ENCODE measurements at regions of chr7 and their contacts with region 1.

Region 1: DNA sequence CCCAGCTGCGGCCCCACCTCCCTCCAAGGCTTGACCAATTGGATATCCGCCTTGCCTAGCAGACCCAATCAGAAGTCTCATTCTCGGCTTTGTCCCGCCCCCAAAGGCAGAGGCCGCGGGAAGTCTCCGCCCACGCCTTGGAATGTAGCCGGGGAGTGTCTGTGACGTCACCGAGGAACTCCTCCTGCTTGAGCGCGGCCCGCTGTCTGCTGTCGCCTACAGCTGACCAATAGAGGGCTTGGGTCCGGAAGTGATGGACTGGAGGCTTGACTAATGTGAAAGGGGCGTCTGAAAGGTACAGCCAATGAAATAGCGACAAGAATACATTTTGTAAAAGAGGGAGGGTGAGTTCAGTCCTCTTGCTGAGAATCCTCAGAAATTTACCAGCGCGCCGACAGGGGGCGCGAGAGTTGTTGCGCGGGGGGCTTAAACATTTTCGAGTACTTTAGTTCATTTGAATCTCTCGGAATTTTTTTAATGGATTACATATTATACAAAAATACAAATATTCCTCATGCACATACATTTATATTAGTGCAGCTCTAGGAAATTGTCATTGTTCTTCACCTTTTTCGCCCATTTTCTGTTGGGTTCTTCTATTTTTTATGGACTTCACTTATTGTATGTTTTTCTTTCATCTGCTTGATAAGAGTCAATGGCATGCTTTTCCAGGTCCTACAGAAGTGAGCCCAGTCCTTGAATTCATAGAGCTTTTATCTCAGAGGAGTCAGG is 376 bp upstream of the CREB3L2 start:
- ATAC-seq: peak; percentile 86 to 94 (median 93)
- H3K4me3 ChIP-seq: peak overlapping the region; percentile 50 to 68 (median 61)
- H3K27ac ChIP-seq: no peak overlapping the region
- H3K4me1 ChIP-seq: peaks cover 14 to 18% of the 10 kb centered on the region in 2 donors

Region 2: DNA sequence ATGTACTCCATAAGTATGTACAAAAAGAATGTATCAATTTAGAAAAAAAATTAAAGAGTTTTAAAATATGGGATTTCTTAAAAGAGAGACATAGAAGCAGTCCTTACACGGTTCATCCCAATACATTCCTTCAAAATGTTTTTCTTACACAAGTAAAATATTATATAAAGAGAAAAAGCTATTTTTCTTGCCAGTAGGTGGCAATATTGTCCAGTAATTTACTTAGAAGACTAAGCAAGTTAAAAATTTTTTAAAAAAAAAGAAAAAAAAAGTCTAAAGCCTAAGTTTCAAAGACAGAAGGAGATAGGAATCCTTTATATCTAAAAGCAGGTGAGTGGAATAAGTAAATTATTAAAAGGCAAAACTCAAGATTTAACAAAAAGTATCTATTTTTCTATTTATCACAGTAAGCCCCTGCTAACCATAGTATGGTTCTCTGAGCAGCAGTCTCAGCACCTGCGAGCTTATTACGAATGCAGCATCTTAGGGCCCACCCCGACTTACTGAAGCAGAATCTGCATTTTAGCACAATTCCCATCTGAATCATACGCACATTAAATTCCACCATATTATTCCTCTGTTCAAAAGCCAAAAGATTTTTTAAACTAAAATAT is 396.1 kb before region 1 on chr7:
- in situ Hi-C with region 1: loop called in 1 of 9 experiments (anchors 25 kb)
- ATAC-seq: peak in 2 of 8 experiments; percentile 26 to 31
- H3K4me3 ChIP-seq: no peak overlapping the region
- H3K27ac ChIP-seq: no peak overlapping the region
- H3K4me1 ChIP-seq: peaks cover 3 to 6% of the 10 kb centered on the region in 2 donors